Activated naive CD4-positive, alpha-beta T cell treated with anti-CD3 and anti-CD28 coated beads for 36 hours (primary cell): ENCODE measurements at regions of chr7 and their contacts with region 1.

Region 1: DNA sequence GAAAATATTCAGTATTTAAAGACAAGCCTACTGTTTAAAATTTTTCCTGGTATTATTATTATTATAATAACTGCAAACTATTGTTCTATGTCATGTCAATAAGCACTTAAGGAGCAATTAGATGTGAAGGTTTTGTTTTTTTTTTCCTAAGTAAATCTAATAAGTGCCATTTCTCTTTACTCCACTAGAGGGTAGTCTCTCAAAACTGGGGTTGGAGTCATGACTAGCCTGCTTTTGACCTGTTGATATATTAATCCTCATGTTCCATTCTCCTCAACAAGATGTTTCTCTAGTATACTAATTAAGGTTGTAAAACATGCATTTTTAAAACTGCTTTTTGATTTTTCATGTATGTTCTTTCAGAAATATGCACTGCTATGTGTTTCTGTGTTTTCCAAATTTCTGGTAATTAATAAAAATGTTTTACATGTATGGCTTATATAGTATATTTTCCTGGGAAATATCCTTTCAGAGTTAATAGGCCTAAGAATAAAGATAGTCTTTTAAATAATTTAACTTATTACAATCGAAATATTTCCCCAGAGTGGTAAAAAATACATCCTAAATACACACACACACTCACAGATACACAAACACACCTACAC is 1.0 kb upstream of the LRRN3 start:
- DNase-seq: no peak
- H3K4me3 Mint-ChIP-seq: no peak overlapping the region
- H3K27ac Mint-ChIP-seq: no peak overlapping the region
- H3K4me1 Mint-ChIP-seq: peaks cover 68% of the 10 kb centered on the region
- H3K27me3 Mint-ChIP-seq: no peaks in the 10 kb centered on the region

Region 2: GRCh38 chr7:111029574-111030251 is 60.2 kb before region 1 on chr7:
- CTCF ChIA-PET with region 1: interaction called, 4 read pairs
- intact Hi-C with region 1: loop called (anchors 1 kb)
- DNase-seq: peak; percentile 76
- H3K4me3 Mint-ChIP-seq: peak overlapping the region; percentile 34
- H3K27ac Mint-ChIP-seq: peak overlapping the region; percentile 89
- H3K4me1 Mint-ChIP-seq: peaks cover 54% of the 10 kb centered on the region
- H3K27me3 Mint-ChIP-seq: no peaks in the 10 kb centered on the region

Region 3: GRCh38 chr7:111103678-111104274 is 13.9 kb after region 1 on chr7:
- CTCF ChIA-PET with region 1: interaction called, 9 read pairs
- intact Hi-C with region 1: loop called (anchors 1 kb)
- DNase-seq: peak; percentile 37
- H3K4me3 Mint-ChIP-seq: no peak overlapping the region
- H3K27ac Mint-ChIP-seq: peak overlapping the region; percentile 41
- H3K4me1 Mint-ChIP-seq: peaks cover 63% of the 10 kb centered on the region
- H3K27me3 Mint-ChIP-seq: no peaks in the 10 kb centered on the region

Region 4: DNA sequence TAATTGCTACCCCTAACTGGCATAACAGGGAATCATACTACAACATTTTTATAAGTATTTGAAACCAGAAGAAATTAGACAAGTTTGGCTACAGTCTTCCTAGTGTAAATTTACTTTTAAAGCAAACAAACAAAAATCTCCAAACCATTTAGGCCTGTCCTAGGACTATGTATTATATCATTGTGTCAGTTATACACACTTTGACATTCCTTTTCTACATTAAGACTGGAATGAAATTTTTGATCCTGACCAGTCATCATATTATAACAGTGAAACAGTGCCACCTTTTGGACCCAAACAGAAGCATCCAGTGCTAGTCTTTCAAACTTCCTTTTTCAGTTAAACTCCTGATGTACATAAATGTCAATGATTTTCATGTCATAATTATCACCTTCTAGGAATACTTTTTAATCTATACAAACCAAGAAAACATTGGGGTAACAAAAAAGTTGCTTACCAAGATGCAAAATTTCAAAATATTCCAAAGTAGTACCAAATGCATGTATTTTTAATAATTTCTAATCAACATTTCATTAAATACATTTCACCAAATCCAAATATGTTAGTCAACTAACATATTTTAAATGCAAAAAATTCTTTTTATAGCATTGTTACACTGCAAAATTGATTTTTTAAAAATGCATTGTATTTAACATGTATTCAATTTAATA is 396.7 kb after region 1 on chr7:
- CTCF ChIA-PET with region 1: no interaction called
- intact Hi-C with region 1: loop called (anchors 1 kb)
- DNase-seq: peak; percentile 15
- H3K4me3 Mint-ChIP-seq: no peak overlapping the region
- H3K27ac Mint-ChIP-seq: no peak overlapping the region
- H3K4me1 Mint-ChIP-seq: no peaks in the 10 kb centered on the region
- H3K27me3 Mint-ChIP-seq: no peaks in the 10 kb centered on the region

Region 5: DNA sequence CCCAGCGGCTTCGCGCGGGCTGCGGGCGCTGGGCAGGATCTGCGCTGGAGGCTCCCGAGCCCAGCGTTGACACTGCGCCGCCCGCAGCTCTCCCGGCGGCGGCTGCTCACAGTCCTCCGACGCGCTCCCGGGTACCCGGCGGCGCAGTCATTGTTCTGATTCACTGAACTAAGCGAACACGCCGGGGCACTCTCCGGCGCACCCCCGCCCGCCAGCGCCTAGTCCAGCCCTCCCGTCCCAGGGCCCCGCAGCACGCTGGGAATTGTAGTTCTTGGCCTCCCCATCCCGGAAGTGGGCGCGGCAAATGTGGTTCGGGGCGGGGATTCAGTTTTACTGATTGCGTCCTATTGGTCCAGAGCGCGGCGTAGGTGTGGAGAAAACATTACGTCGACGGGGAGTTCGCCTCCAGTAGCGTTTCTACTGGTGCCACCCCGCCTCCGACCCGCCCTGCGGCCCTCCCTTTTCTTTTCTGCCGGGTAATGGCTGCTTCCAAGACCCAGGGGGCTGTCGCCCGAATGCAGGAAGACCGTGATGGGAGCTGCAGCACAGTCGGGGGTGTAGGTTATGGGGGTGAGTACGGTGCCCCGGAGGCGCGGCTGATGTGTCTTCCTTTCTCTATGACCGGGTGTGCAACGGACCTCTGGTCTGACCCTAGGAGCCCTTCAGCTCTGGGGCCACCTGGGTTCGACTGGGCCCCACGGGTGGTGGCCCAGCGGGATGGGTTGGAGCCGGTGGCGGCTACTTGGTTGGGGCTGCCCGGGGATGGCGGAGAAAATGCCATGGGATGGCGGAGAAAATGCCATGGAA is 1116.5 kb after region 1 on chr7 and contains the starts of genes DOCK4 and ZNF277:
- CTCF ChIA-PET with region 1: no interaction called
- intact Hi-C with region 1: loop called (anchors 5 kb)
- DNase-seq: peak; percentile 99
- H3K4me3 Mint-ChIP-seq: peak within 1 kb of the TSS; percentile 97
- H3K27ac Mint-ChIP-seq: peak within 1 kb of the TSS; percentile 71
- H3K4me1 Mint-ChIP-seq: peaks cover 35% of the 10 kb centered on the region
- H3K27me3 Mint-ChIP-seq: peaks cover 28% of the 10 kb centered on the region
- total RNA-seq, gene DOCK4: 0.43 to 0.62 TPM
- total RNA-seq, gene ZNF277: 27.0 to 28.2 TPM